ENCODE measurements at regions of chr11 and their contacts with region 1.

Region 1: DNA sequence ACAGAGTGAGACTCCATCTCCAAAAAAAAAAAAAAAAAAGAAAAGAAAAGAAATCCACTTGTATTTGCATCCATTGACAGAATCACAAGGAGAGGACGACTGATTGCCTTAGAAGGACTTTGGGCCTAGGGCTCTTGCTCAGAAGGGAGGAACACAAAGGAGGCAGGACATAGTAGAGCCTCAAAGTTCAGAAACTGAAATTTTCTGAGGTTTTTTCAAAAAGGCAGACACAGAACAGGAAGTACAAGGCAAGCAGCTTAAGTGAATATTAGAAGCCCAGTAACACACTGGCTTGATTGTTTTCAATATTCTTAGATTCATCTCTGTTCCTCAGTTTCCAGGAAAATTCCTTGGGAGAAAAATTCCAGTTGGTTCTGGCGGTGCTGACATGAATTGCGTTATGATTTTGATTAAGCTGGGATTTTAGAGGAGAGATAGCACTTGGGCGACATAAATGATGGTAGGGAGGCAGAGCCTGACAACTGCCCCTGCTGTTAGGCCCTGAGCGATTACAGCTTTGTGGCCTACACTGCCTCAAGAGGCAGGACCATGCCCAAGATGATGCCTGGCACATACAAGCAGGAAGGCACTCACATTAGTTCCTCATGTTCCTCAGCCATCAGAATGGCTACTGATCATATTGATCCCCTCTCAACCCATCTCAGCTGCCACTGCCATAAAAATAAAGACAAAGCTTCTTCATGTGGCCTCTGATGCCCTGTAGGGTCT is 15.3 kb downstream of the CLPB start:
- DNase-seq: no peak
- ATAC-seq: peak in 2 of 4 experiments; percentile 28 to 33
- H3K4me3 ChIP-seq: no peak overlapping the region
- H3K4me3 Mint-ChIP-seq: no peak overlapping the region
- H3K27ac ChIP-seq: no peak overlapping the region
- H3K27ac Mint-ChIP-seq: peak overlapping the region; percentile 27 to 81
- H3K4me1 ChIP-seq: peaks cover 3 to 11% of the 10 kb centered on the region in 2 experiments
- H3K4me1 Mint-ChIP-seq: peaks cover 35 to 38% (median 37%) of the 10 kb centered on the region in 3 donors
- H3K27me3 ChIP-seq: no peaks in the 10 kb centered on the region
- H3K27me3 Mint-ChIP-seq: no peaks in the 10 kb centered on the region

Region 2: GRCh38 chr11:72352859-72353551 is 66.0 kb before region 1 on chr11:
- CTCF ChIA-PET with region 1: no interaction called
- POLR2A ChIA-PET with region 1: no interaction called
- DNase-seq: no peak
- ATAC-seq: no peak
- H3K4me3 ChIP-seq: no peak overlapping the region
- H3K4me3 Mint-ChIP-seq: no peak overlapping the region
- H3K27ac ChIP-seq: no peak overlapping the region
- H3K27ac Mint-ChIP-seq: no peak overlapping the region
- H3K4me1 ChIP-seq: no peaks in the 10 kb centered on the region
- H3K4me1 Mint-ChIP-seq: no peaks in the 10 kb centered on the region
- H3K27me3 ChIP-seq: no peaks in the 10 kb centered on the region
- H3K27me3 Mint-ChIP-seq: no peaks in the 10 kb centered on the region

Region 3: DNA sequence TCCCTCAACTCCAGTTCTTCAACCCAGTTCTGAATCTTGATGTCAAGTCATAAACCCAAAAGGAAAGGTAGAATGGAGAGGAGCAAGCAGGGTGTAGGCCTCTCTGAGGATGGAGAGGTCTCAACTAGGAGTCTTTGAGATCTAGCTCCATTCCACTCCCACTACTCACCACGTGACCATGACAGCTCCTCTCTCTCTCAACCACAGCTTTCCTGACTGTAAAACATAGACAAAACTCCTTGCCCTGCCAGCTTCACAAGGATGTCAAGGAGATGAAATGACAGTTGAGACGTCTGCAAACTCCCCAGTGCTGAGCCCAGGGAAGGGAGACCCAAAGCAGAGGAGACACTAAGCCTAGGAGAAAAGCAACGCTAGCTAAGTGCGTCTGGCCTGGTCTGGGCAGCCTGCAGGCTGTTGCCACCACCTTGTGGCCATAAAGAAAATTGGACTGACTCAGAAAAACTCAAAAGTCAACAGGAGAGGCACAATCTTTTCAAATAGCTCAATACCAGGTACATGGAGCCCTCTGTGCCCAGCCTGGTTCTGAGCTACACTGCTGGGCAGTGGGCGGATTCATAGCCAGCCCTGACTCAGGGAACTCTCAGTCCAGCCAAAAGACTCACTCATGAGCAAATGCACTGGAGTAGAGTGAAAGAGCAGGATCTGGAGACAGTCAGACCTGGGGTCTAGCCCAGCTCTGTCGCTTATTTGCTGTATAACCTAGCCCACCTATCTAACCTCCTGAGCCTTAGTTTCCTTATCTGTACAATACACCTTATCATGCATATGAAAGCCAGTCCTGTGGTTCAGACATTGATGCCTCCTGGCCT is 12.0 kb after region 1 on chr11:
- CTCF ChIA-PET with region 1: interaction called, 5 to 13 read pairs
- POLR2A ChIA-PET with region 1: no interaction called
- DNase-seq: peak in 25 of 35 experiments; percentile 7 to 64 (median 17)
- ATAC-seq: peak in 1 of 4 experiments; percentile 10
- H3K4me3 ChIP-seq: no peak overlapping the region
- H3K4me3 Mint-ChIP-seq: peak overlapping the region in 1 of 3 donors; percentile 5
- H3K27ac ChIP-seq: no peak overlapping the region
- H3K27ac Mint-ChIP-seq: peak overlapping the region; percentile 29 to 59
- H3K4me1 ChIP-seq: peaks cover 5 to 32% of the 10 kb centered on the region in 2 experiments
- H3K4me1 Mint-ChIP-seq: peaks cover 35 to 55% (median 38%) of the 10 kb centered on the region in 3 donors
- H3K27me3 ChIP-seq: no peaks in the 10 kb centered on the region
- H3K27me3 Mint-ChIP-seq: no peaks in the 10 kb centered on the region

Region 4: DNA sequence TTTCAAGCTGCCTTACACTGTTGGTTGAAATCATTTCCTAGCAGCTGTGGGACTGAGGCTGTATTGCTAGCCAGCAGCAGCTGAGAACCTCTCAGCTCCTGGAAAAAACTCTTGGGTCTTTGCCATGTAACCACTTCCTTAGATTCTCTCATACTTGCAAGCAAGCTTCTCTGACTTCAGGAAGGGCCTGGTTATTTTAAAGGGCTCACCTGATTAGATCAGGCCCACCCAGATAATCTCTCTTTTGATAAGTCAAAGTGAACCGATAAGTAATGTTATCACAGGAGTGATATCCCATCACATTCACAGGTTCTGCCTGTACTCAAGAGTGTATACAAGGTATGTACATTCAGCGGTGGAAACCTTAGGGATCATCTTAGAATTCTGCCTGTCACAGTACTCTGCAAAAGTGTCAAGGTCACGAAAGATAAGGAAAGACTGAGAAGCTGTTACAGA is 22.8 kb after region 1 on chr11:
- CTCF ChIA-PET with region 1: no interaction called
- POLR2A ChIA-PET with region 1: no interaction called
- DNase-seq: no peak
- ATAC-seq: no peak
- H3K4me3 ChIP-seq: no peak overlapping the region
- H3K4me3 Mint-ChIP-seq: no peak overlapping the region
- H3K27ac ChIP-seq: no peak overlapping the region
- H3K27ac Mint-ChIP-seq: no peak overlapping the region
- H3K4me1 ChIP-seq: peaks cover 3% of the 10 kb centered on the region in 2 experiments
- H3K4me1 Mint-ChIP-seq: peaks cover 4 to 12% (median 5%) of the 10 kb centered on the region in 3 donors
- H3K27me3 ChIP-seq: peaks cover 0 to 5% of the 10 kb centered on the region in 2 experiments
- H3K27me3 Mint-ChIP-seq: no peaks in the 10 kb centered on the region

Region 5: GRCh38 chr11:73126804-73127480 is 707.9 kb after region 1 on chr11:
- CTCF ChIA-PET with region 1: no interaction called
- POLR2A ChIA-PET with region 1: interaction called in 1 of 2 experiments, 10 read pairs
- DNase-seq: no peak
- ATAC-seq: no peak
- H3K4me3 ChIP-seq: no peak overlapping the region
- H3K4me3 Mint-ChIP-seq: no peak overlapping the region
- H3K27ac ChIP-seq: no peak overlapping the region
- H3K27ac Mint-ChIP-seq: no peak overlapping the region
- H3K4me1 ChIP-seq: no peaks in the 10 kb centered on the region
- H3K4me1 Mint-ChIP-seq: peaks cover 14 to 21% (median 18%) of the 10 kb centered on the region in 3 donors
- H3K27me3 ChIP-seq: no peaks in the 10 kb centered on the region
- H3K27me3 Mint-ChIP-seq: no peaks in the 10 kb centered on the region